Body of pancreas (tissue), 4 donors: ENCODE measurements at regions of chr2 and their contacts with region 1.

Region 1: DNA sequence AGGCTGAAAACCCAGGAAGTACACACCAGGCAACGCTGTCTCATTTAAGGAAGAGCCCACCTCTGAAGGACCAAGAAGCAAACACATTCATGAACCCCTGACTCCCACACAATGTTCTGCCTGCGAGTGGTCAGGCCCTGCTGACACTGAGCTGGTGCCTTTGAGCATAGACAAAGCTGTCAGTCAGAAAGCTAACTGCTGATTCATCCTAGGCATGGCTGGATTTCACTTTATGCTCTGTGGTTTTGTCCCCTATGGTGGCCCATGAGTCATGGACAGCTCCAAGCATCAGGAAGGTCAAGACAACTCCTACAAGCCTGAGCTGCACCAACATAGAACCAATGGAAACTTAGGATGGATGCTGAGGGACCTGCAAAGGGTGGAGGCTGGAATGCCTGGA is 78.9 kb downstream of the UXS1 start:
- DNase-seq: no peak
- ATAC-seq: no peak
- H3K4me3 ChIP-seq: no peak overlapping the region
- H3K27ac ChIP-seq: no peak overlapping the region
- H3K4me1 ChIP-seq: peaks cover 24% of the 10 kb centered on the region
- H3K27me3 ChIP-seq: no peaks in the 10 kb centered on the region
- CTCF ChIP-seq: no peak
- POLR2A ChIP-seq: no peak

Region 2: DNA sequence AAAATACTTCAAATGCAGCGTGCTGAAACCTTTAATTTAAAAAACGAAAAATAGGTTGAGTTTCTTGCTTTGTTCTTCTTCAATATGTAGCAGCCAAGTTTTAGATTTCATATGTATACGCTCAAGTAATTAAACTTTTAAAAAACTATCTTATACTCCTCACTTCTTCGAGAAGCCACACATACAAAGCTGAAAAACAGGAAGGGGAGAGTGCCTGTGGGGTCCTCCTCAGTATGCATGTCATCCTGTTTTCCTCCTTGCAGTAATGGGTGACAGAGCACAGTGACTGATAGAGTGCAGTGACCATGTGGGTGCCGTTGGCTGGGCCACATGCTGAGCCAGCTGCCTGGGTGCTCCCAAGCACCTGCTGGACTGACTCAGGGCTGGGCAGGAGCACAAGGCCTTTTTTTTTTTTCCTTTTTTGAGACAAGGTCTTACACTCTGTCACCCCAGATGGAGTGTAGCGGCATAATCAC is 45.6 kb after region 1 on chr2:
- intact Hi-C with region 1: loop called (anchors 10 kb)
- DNase-seq: peak in 2 of 4 donors; percentile 23 to 51
- ATAC-seq: no peak
- H3K4me3 ChIP-seq: no peak overlapping the region
- H3K27ac ChIP-seq: peak overlapping the region; percentile 43 to 63 (median 54)
- H3K4me1 ChIP-seq: peaks cover 11% of the 10 kb centered on the region
- H3K27me3 ChIP-seq: no peaks in the 10 kb centered on the region
- CTCF ChIP-seq: no peak
- POLR2A ChIP-seq: no peak